OCI-LY7 (cell line): ENCODE measurements at regions of chr4 and their contacts with region 1.

Region 1: GRCh38 chr4:118888666-118889311 is at the start of gene SYNPO2:
- DNase-seq: peak; percentile 3
- H3K4me3 ChIP-seq: peak within 1 kb of the TSS; percentile 28
- H3K27ac ChIP-seq: no peak within 1 kb of the TSS
- H3K4me1 ChIP-seq: no peaks in the 10 kb centered on the region
- CTCF ChIP-seq: no peak
- total RNA-seq, gene SYNPO2: 0.19 and 0.31 TPM in 2 replicates

Region 2: DNA sequence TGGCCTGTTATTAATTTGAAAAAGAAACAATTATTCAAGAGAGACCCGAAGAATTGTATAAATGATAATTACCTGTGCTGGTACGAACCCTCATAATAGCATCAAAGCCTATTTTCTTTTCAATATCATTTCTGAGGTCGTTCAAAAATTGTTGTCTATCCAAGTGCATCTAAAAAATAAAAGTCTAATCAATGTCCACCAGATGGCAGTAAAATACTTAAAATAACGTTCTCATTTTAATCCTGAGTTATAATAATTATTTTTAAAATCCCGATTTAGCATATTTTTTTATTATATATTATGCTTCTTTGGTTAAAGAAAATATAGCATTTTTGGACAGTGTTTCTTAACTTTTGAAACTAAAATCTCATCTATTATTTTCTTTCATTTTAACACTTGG is 147.9 kb before region 1 on chr4:
- CTCF ChIA-PET with region 1: no interaction called
- POLR2A ChIA-PET with region 1: interaction called, 3 read pairs
- intact Hi-C with region 1: loop called (anchors 1 kb)
- DNase-seq: peak; percentile 58
- H3K4me3 ChIP-seq: no peak overlapping the region
- H3K27ac ChIP-seq: no peak overlapping the region
- H3K4me1 ChIP-seq: no peaks in the 10 kb centered on the region
- CTCF ChIP-seq: peak; percentile 84